Activated B cell treated with CpG ODN at 0.5 μM for 24 hours (primary cell): ENCODE measurements at regions of chr2 and their contacts with region 1.

Region 1: GRCh38 chr2:214747992-214748391 is 61.5 kb downstream of the BARD1 start:
- DNase-seq: no peak
- ATAC-seq: peak; percentile 40
- H3K4me3 Mint-ChIP-seq: no peak overlapping the region
- H3K27ac Mint-ChIP-seq: no peak overlapping the region
- H3K4me1 Mint-ChIP-seq: peaks cover 15% of the 10 kb centered on the region
- H3K27me3 Mint-ChIP-seq: no peaks in the 10 kb centered on the region
- CTCF ChIP-seq: no peak

Region 2: DNA sequence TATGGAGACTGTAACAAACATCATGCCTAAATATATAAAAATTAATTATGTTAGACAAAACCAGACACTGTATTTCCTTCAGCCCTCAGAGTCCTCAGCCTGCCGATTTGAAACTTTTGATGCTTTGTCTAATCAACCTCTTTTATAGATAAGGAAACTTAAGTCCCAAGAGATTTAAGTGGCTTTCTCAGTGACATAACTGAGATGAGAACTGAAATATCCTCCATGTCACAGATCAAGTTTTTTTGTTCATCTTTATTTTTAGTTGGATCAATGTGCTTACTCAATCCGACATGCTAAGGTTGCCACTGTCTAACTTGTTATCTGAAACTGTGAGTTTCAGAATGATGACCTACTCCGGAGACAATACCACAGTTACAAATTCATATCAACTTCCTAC is 10.8 kb before region 1 on chr2:
- CTCF ChIA-PET with region 1: no interaction called
- POLR2A ChIA-PET with region 1: no interaction called
- intact Hi-C with region 1: loop called (anchors 1 kb)
- DNase-seq: no peak
- ATAC-seq: peak; percentile 57
- H3K4me3 Mint-ChIP-seq: no peak overlapping the region
- H3K27ac Mint-ChIP-seq: no peak overlapping the region
- H3K4me1 Mint-ChIP-seq: peaks cover 10% of the 10 kb centered on the region
- H3K27me3 Mint-ChIP-seq: no peaks in the 10 kb centered on the region
- CTCF ChIP-seq: no peak

Region 3: GRCh38 chr2:214781226-214781625 is 33.2 kb after region 1 on chr2:
- CTCF ChIA-PET with region 1: no interaction called
- POLR2A ChIA-PET with region 1: no interaction called
- intact Hi-C with region 1: loop called (anchors 5 kb)
- DNase-seq: no peak
- ATAC-seq: no peak
- H3K4me3 Mint-ChIP-seq: no peak overlapping the region
- H3K27ac Mint-ChIP-seq: no peak overlapping the region
- H3K4me1 Mint-ChIP-seq: no peaks in the 10 kb centered on the region
- H3K27me3 Mint-ChIP-seq: no peaks in the 10 kb centered on the region
- CTCF ChIP-seq: no peak

Region 4: GRCh38 chr2:215207791-215208367 is 459.9 kb after region 1 on chr2:
- CTCF ChIA-PET with region 1: no interaction called
- POLR2A ChIA-PET with region 1: no interaction called
- intact Hi-C with region 1: no loop called
- DNase-seq: no peak
- ATAC-seq: no peak
- H3K4me3 Mint-ChIP-seq: no peak overlapping the region
- H3K27ac Mint-ChIP-seq: no peak overlapping the region
- H3K4me1 Mint-ChIP-seq: no peaks in the 10 kb centered on the region
- H3K27me3 Mint-ChIP-seq: no peaks in the 10 kb centered on the region
- CTCF ChIP-seq: no peak